Psoas muscle (tissue), 8 donors: ENCODE measurements at regions of chr11 and their contacts with region 1.

Region 1: DNA sequence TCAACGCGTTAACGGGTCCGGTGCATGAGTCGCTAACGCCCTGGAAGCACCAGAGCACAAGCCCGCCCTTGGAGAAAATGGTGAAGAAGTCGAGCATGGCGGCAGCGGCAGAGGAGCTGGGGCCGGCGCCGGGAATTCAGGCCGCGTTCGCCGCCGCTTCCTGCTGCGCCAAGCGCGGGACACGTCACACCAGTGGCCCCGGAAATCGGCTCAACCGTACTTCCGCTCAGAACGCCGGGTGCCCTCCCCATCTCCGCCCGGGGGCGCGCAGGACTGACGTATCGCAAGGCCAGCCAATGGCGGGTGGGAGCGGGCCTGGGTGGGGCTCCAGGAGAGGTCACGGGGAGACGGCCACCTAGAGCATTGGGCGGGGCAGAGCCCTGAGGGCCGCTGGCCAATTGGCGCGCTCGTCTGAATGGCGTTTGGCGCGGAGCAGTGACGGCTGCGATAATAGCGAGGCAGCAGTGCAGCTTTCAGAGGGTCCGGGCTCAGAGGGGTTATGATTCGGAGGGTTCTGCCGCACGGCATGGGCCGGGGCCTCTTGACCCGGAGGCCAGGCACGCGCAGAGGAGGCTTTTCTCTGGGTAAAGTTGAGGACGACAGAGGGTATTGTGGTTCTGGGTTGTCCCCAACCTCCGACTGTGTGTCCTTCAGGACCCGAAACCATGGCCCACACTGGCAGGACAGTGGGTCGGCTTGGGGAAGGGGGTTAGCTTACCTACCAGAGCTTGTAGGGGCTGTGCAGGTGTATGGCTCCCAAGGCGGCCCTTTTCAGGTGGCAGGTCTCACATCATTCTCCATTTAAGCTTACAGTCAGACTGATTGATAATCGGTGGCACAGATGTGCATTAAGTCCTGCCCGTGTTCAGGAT is at the starts of genes FOXRED1 and SRPRA:
- DNase-seq: peak; percentile 100
- ATAC-seq: peak; percentile 98 to 99 (median 99)
- H3K4me3 ChIP-seq: peak within 1 kb of the TSS; percentile 85
- H3K27ac ChIP-seq: peak within 1 kb of the TSS; percentile 92
- H3K4me1 ChIP-seq: peaks cover 16% of the 10 kb centered on the region
- H3K27me3 ChIP-seq: no peaks in the 10 kb centered on the region
- CTCF ChIP-seq: no peak
- total RNA-seq, gene FOXRED1: 12.3 to 27.7 (median 21.7) TPM
- total RNA-seq, gene SRPRA: 54.4 to 105 (median 71.2) TPM

Region 2: GRCh38 chr11:125592305-125593112 is 676.4 kb before region 1 on chr11 and contains the start of gene STT3A:
- intact Hi-C with region 1: loop called in 1 of 2 experiments (anchors 10 kb)
- DNase-seq: peak; percentile 100
- ATAC-seq: peak; percentile 97 to 99 (median 98)
- H3K4me3 ChIP-seq: peak within 1 kb of the TSS; percentile 70
- H3K27ac ChIP-seq: peak within 1 kb of the TSS; percentile 96
- H3K4me1 ChIP-seq: peaks cover 20% of the 10 kb centered on the region
- H3K27me3 ChIP-seq: no peaks in the 10 kb centered on the region
- CTCF ChIP-seq: no peak
- total RNA-seq, gene STT3A: 27.2 to 33.1 (median 31.0) TPM

Region 3: GRCh38 chr11:125923012-125923579 is 345.8 kb before region 1 on chr11:
- intact Hi-C with region 1: loop called in 1 of 2 experiments (anchors 10 kb)
- DNase-seq: peak in 1 of 2 donors; percentile 39
- ATAC-seq: peak; percentile 75 to 93 (median 85)
- H3K4me3 ChIP-seq: no peak overlapping the region
- H3K27ac ChIP-seq: no peak overlapping the region
- H3K4me1 ChIP-seq: no peaks in the 10 kb centered on the region
- H3K27me3 ChIP-seq: no peaks in the 10 kb centered on the region
- CTCF ChIP-seq: peak; percentile 85

Region 4: DNA sequence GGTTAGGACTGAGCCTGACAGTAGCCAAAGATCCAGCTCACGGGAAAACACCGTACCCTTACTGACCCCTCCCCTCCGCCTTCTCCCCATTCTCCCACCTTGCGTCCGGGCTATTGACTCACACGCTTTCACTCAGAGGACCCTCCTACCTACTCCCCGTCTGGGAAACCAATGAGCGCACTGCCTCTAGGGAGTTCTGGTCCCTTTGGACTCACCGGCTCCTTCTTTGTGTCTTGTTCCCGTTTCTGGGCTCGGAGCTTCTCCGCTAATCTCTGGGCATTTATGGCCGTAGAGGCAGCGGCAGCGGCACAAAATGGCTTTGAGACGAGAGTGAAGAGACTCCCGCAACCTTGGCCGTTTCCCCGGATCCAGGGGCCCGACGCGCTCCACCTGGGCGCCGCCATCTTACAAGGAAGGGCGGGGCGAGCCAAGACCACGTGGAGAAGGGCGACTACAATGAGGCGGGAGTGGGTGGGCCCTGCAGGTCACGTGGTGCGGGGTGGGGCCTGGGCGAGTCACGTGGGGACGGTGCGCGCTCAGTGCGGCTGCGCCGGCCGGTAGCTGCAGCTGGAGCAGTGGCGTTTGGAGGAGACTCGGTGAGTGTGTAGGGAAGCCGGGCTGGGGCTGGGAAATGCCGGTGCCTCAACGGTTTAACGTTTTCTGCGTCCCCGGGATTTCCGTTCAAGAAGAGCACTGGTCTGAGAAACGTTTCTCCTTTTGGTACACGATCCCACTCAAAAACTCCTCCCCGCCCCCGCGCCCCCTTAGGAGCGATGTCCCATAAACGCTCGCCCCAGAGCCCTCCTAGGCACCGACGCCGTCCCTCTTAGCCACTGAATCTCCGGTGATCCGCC is 57.5 kb before region 1 on chr11 and contains the starts of genes FAM118B and RPUSD4:
- intact Hi-C with region 1: loop called (anchors 2 to 5 kb)
- DNase-seq: peak; percentile 99
- ATAC-seq: peak; percentile 95 to 98 (median 95)
- H3K4me3 ChIP-seq: peak within 1 kb of the TSS; percentile 92
- H3K27ac ChIP-seq: peak within 1 kb of the TSS; percentile 83
- H3K4me1 ChIP-seq: peaks cover 49% of the 10 kb centered on the region
- H3K27me3 ChIP-seq: no peaks in the 10 kb centered on the region
- CTCF ChIP-seq: no peak
- total RNA-seq, gene FAM118B: 16.4 to 46.7 (median 24.5) TPM
- total RNA-seq, gene RPUSD4: 75.1 to 139 (median 88.7) TPM

Region 5: GRCh38 chr11:126282736-126283591 is 14.0 kb after region 1 on chr11 and contains the start of gene TIRAP:
- intact Hi-C with region 1: no loop called
- DNase-seq: peak; percentile 78 to 86
- ATAC-seq: peak; percentile 82 to 90 (median 88)
- H3K4me3 ChIP-seq: peak within 1 kb of the TSS; percentile 68
- H3K27ac ChIP-seq: peak within 1 kb of the TSS; percentile 94
- H3K4me1 ChIP-seq: peaks cover 22% of the 10 kb centered on the region
- H3K27me3 ChIP-seq: no peaks in the 10 kb centered on the region
- CTCF ChIP-seq: peak; percentile 10
- total RNA-seq, gene TIRAP: 5.8 to 9.6 (median 6.5) TPM

Region 6: GRCh38 chr11:126303623-126304456 is 34.9 kb after region 1 on chr11 and contains the start of gene DCPS:
- intact Hi-C with region 1: no loop called
- DNase-seq: peak; percentile 92 to 95
- ATAC-seq: peak; percentile 97 to 98 (median 98)
- H3K4me3 ChIP-seq: peak within 1 kb of the TSS; percentile 79
- H3K27ac ChIP-seq: peak within 1 kb of the TSS; percentile 86
- H3K4me1 ChIP-seq: peaks cover 32% of the 10 kb centered on the region
- H3K27me3 ChIP-seq: no peaks in the 10 kb centered on the region
- CTCF ChIP-seq: peak; percentile 3
- total RNA-seq, gene DCPS: 11.8 to 16.7 (median 14.2) TPM

Region 7: DNA sequence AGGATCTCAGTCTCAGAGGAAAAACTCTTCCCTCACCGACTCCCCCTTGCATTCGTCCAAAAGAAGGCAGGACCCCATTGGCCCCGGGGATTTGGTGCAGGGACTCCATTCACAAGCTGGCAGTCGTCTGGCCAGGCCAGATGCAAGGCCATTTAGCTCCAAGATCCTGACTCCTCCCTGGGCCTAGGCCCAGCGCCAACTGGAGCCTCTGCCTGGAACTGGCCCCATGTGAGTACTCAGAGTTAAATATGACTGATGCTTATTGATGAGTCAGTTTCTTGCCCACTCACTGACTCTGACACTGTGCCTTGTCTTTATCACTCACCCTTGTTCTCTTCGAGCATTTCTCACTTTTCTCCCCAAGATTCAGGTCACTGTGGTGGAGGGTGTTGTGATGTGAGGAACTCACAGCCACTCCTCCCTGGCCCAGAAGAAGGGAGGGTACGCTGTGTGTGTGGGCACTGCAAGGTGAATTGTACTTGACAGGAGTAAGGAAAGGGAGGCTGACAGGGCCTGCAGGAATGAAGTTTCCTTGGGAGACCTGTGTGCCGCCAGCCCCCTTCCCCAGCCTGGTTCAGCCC is 63.3 kb after region 1 on chr11:
- intact Hi-C with region 1: no loop called
- DNase-seq: peak; percentile 89 to 92
- ATAC-seq: peak; percentile 89 to 96 (median 91)
- H3K4me3 ChIP-seq: no peak overlapping the region
- H3K27ac ChIP-seq: peak overlapping the region; percentile 70
- H3K4me1 ChIP-seq: peaks cover 20% of the 10 kb centered on the region
- H3K27me3 ChIP-seq: no peaks in the 10 kb centered on the region
- CTCF ChIP-seq: no peak